ENCODE measurements at regions of chr7 and their contacts with region 1.

Region 1: GRCh38 chr7:28955718-28956619 is 2.2 kb downstream of the TRIL start:
- DNase-seq: peak; percentile 50
- H3K4me3 Mint-ChIP-seq: no peak overlapping the region
- H3K27ac Mint-ChIP-seq: no peak overlapping the region
- H3K4me1 Mint-ChIP-seq: peaks cover 10% of the 10 kb centered on the region
- H3K27me3 Mint-ChIP-seq: peaks cover 50% of the 10 kb centered on the region

Region 2: GRCh38 chr7:29099891-29100847 is 144.2 kb after region 1 on chr7:
- CTCF ChIA-PET with region 1: interaction called, 16 read pairs
- intact Hi-C with region 1: loop called (anchors 1 kb)
- DNase-seq: no peak
- H3K4me3 Mint-ChIP-seq: no peak overlapping the region
- H3K27ac Mint-ChIP-seq: peak overlapping the region; percentile 30
- H3K4me1 Mint-ChIP-seq: peaks cover 5% of the 10 kb centered on the region
- H3K27me3 Mint-ChIP-seq: no peaks in the 10 kb centered on the region

Measured in activated naive CD4-positive, alpha-beta T cell treated with anti-CD3 and anti-CD28 coated beads for 36 hours (primary cell).